Activated CD4-positive, alpha-beta T cell treated with anti-CD3 and anti-CD28 coated beads for 36 hours (primary cell): ENCODE measurements at regions of chr2 and their contacts with region 1.

Region 1: DNA sequence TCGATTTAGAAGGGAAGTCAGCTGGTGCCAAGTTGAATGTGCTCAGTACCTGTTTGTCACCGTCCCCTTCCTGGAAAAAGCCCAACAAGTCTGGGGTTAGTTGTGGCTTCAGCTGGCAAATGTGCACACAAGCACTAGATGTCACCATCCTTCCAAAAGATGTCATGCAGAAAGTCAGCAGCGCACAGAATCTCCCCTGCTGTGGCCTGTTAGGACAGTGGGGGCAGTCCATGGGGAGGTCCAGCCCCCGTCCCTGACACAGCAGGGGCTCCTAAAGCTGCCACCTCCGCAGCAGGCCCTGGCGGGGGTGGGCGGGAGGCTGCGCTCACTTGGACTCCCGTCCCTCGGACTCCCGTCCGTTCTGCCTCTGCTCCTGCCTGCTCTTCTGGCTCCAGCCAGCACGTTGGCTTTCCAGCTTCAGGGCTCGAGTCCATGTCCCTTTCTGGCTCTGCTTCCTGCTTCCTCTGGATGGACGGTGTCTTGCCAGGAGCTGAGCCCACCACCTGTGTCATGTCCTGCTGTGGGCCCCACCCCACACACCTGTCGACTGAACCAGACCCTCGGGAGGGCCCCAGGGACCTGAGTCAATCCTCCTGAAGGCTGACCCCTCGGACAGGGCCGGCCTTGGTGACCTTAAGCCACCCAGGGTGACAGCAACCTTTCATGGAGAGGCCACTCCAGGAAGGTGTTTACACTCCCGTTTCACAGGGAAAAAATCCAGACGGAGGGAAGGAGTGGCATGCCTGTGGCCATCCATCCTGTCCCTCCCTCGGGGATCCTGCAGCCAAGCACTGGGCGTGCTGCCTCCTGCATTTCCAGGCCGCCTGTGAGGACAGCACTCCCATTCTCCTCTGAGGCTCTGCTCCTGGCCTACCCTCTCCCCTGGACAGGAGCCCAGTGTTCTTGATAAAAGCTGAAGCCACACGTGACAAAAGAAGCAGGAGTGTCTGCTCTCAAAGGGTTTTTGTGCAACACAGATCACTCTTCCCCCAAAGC is 8.5 kb downstream of the RAB17 start:
- DNase-seq: peak; percentile 82
- ATAC-seq: peak; percentile 99
- H3K4me3 Mint-ChIP-seq: no peak overlapping the region
- H3K27ac Mint-ChIP-seq: peak overlapping the region; percentile 58
- H3K4me1 Mint-ChIP-seq: peaks cover 3% of the 10 kb centered on the region
- H3K27me3 Mint-ChIP-seq: no peaks in the 10 kb centered on the region

Region 2: GRCh38 chr2:237603718-237604362 is 21.8 kb after region 1 on chr2:
- CTCF ChIA-PET with region 1: no interaction called
- POLR2A ChIA-PET with region 1: no interaction called
- intact Hi-C with region 1: no loop called
- DNase-seq: peak; percentile 64
- ATAC-seq: peak; percentile 98
- H3K4me3 Mint-ChIP-seq: no peak overlapping the region
- H3K27ac Mint-ChIP-seq: peak overlapping the region; percentile 58
- H3K4me1 Mint-ChIP-seq: peaks cover 24% of the 10 kb centered on the region
- H3K27me3 Mint-ChIP-seq: no peaks in the 10 kb centered on the region

Region 3: DNA sequence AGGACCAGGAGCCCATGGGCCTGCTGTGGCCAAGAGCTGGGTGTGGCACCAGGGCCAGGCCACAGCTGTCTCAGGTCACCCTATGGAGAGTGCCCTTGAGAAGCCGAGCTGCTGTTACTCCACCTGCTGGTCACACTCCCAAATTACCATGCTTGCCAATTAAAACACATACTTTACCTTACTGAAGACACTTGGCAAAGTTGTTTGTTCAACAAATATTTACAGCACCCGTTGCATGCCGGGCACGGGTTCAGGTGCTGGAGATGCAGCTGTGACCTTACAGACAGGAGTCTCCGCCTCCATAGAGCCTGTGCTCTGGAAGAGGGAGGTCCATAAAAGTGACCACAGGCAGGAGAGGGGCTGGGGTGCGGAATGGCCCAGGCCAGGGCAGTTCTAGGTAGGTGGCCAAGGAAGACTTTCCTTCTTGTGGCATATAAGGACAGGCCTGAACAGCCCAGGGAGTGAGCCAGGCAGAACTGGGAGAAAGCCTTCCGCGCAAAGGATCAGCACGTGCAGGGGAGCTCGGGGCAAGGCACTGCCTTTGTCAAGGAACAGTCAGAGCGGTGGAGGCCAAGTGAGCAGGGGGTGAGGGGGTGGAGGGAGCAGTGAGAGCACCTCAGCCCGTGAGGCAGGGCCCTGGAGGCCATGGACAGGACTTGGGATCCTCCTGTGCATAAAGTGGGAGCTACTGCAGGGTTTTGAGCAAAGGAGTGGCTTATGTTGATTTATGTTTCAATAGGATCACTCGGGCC is 192.9 kb after region 1 on chr2:
- CTCF ChIA-PET with region 1: interaction called, 14 read pairs
- POLR2A ChIA-PET with region 1: no interaction called
- intact Hi-C with region 1: no loop called
- DNase-seq: peak; percentile 71
- ATAC-seq: peak; percentile 85
- H3K4me3 Mint-ChIP-seq: no peak overlapping the region
- H3K27ac Mint-ChIP-seq: no peak overlapping the region
- H3K4me1 Mint-ChIP-seq: no peaks in the 10 kb centered on the region
- H3K27me3 Mint-ChIP-seq: no peaks in the 10 kb centered on the region

Region 4: DNA sequence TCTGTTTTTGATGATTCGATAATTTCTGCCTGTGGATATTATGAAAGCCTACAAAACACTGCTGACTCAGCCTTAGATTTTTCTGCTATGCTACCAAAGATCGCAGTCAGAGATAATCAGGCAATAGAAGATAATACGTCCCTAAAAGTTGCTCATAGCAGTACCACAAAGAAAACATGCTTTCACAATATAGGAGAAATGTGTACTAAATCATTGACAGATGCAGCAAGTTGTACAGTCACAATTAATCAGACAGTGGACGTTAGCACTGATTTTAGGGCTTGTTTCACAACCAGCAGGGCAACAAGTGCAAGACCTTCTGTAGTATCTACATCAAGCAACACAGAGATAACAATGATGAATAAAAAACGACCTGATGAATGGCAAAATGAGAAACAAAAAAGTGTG is 236.0 kb after region 1 on chr2:
- CTCF ChIA-PET with region 1: no interaction called
- POLR2A ChIA-PET with region 1: no interaction called
- intact Hi-C with region 1: loop called in 1 of 2 experiments (anchors 5 kb)
- DNase-seq: no peak
- ATAC-seq: no peak
- H3K4me3 Mint-ChIP-seq: no peak overlapping the region
- H3K27ac Mint-ChIP-seq: peak overlapping the region; percentile 21
- H3K4me1 Mint-ChIP-seq: peaks cover 19% of the 10 kb centered on the region
- H3K27me3 Mint-ChIP-seq: no peaks in the 10 kb centered on the region

Region 5: GRCh38 chr2:238263204-238264071 is 681.4 kb after region 1 on chr2:
- CTCF ChIA-PET with region 1: no interaction called
- POLR2A ChIA-PET with region 1: no interaction called
- intact Hi-C with region 1: loop called in 1 of 2 experiments (anchors 5 kb)
- DNase-seq: peak; percentile 88
- ATAC-seq: peak; percentile 87
- H3K4me3 Mint-ChIP-seq: no peak overlapping the region
- H3K27ac Mint-ChIP-seq: peak overlapping the region; percentile 63
- H3K4me1 Mint-ChIP-seq: peaks cover 3% of the 10 kb centered on the region
- H3K27me3 Mint-ChIP-seq: no peaks in the 10 kb centered on the region